Right ventricle myocardium inferior (tissue), 1 donor: ENCODE measurements at regions of chr18 and their contacts with region 1.

Region 1: GRCh38 chr18:25771841-25772240 is 318.6 kb downstream of the SS18 start:
- DNase-seq: no peak
- ATAC-seq: no peak

Region 2: DNA sequence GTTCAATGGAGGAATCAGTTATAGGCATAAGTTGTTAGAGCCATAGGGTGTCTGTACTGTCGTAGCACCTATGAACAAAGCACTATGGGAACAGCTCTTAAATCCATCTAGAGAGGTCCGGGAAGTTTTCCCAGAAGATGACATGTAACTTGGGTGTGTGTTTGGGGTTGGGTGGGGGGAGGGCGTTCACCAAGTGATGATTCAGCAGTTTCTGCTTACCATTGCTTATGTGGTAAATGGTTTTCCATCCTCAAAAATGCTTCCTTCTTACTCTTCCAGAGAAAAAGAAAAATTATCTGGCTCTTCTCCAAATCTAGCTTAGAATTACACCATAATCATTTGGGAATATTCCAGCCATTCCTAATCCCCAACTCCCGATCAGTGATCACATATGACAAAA is 58.7 kb before region 1 on chr18:
- intact Hi-C with region 1: no loop called
- DNase-seq: no peak
- ATAC-seq: no peak

Region 3: DNA sequence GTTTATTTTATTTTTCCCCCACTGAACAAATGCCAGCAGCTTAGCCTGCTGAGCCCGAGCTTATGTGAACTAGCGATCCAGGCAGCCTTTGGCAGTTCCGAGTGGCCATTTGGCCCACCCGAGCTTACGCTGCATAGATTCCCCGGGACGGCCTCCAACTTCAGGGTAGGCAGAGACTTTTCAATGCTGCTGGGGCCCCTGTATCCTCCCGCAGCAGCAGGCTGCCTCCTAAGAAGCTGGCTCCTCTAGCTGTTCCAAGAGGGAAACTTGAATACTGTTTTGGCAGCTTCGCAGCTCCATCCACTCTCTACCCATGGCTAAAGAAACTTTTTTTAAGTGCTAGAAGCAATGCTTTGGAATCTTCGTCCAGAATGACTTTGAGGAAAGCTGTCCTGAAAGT is 23.4 kb after region 1 on chr18:
- intact Hi-C with region 1: loop called (anchors 1 kb)
- DNase-seq: peak; percentile 41
- ATAC-seq: no peak

Region 4: DNA sequence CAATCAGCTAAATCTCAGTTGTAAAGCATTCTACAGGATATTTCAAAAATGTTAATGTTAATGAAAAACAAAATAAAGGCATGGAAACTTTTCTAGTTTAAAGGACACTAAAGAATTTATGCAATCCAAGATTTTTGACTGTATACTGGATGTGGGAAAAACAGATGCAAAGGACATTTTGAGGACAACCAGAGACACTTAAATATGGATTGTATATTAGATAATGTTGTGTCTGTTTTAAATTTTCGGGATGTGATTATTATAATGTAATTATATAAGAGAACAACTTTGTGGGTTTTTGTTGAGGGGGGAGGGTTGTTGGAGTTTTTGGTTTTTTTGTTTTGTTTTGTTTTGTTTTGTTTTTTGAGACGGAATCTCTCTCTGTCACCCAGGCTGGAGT is 392.7 kb after region 1 on chr18:
- intact Hi-C with region 1: no loop called
- DNase-seq: no peak
- ATAC-seq: no peak